Gastrocnemius medialis (tissue), 4 donors: ENCODE measurements at regions of chr18 and their contacts with region 1.

Region 1: DNA sequence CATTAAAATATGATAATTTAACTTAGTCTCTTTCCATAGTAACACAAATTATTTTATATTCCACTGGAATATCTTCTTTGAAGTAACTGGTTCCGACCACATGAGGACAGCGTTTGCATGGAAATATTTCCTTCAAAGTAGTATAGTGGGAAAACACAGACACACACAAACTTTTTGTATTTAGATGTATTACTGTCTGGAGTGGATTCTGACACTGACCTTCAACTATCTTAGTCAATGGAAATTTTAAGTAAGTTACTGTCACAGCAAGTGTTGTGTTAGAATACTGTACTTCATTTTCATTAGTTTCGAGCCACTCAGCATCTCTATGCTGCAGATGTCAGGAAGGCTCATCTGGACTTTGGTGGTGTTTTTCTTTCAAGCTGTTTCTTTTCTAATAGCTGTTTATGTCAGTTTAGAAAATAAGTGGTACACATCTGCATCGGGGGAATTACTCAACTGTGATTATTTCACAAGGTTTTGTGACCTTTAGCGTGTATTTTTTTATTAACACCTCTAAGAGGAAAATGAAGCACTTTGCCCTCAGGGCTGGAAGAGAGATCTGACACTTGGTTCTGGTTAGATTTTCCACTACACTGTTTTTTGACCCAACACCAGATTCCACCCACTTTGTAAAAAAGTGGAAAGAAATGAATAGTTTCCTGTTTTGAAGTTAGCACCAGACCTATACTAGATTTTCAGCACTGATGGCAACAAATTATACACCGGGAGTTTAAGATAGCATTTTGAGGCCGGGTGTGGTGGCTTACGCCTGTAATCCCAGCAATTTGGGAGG is 18.9 kb upstream of the THOC1 start:
- DNase-seq: no peak
- ATAC-seq: no peak
- H3K4me3 ChIP-seq: no peak overlapping the region
- H3K27ac ChIP-seq: no peak overlapping the region
- H3K4me1 ChIP-seq: no peaks in the 10 kb centered on the region
- H3K27me3 ChIP-seq: peaks cover 0 to 3% (median 0%) of the 10 kb centered on the region in 3 donors
- CTCF ChIP-seq: peak in 1 of 5 experiments; percentile 26
- POLR2A ChIP-seq: no peak

Region 2: DNA sequence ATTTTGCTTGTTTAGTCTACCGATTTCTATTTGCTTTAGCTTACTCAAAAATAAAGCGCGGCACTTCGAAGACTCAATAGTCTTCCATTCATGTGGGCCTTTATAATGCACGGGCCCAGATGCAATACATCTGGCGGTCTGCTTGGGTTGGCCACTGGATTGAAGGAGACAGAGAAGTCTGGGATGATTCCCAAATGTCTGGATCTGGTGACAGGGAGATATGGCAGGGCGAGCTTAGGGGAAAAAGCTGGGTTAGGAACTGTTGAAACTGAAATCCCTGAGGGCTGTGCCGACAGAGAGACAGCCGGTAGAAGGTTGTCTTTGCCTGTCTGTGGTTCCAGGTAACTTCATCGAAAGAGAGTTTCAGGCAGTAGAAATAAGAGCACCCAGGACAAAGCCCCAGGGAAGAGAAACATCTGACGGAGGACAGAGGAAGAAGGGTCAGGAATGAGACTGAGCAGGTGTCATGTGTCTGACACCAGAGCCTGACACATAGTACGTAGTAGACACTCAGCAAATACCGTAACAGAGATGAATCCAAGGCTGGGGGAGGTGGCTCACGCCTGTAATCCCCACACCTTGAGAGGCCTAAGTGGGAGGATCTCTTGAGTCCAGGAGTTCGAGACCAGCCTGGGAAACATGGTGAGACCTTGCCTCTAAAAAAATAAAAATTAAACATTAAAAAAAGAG is 323.6 kb after region 1 on chr18:
- in situ Hi-C with region 1: loop called in 3 of 4 experiments (anchors 5 to 10 kb)
- intact Hi-C with region 1: no loop called
- DNase-seq: no peak
- ATAC-seq: no peak
- H3K4me3 ChIP-seq: no peak overlapping the region
- H3K27ac ChIP-seq: no peak overlapping the region
- H3K4me1 ChIP-seq: no peaks in the 10 kb centered on the region
- H3K27me3 ChIP-seq: no peaks in the 10 kb centered on the region
- CTCF ChIP-seq: no peak
- POLR2A ChIP-seq: no peak